ENCODE measurements at regions of chr13 and their contacts with region 1.

Region 1: GRCh38 chr13:51832471-51833152 is 12.4 kb downstream of the TMEM272 start:
- DNase-seq: peak; percentile 65
- ATAC-seq: peak; percentile 94
- H3K4me3 ChIP-seq: no peak overlapping the region
- H3K4me3 Mint-ChIP-seq: peak overlapping the region; percentile 37
- H3K27ac ChIP-seq: no peak overlapping the region
- H3K27ac Mint-ChIP-seq: no peak overlapping the region
- H3K4me1 ChIP-seq: peaks cover 7 to 29% of the 10 kb centered on the region in 2 donors
- H3K4me1 Mint-ChIP-seq: peaks cover 39% of the 10 kb centered on the region
- H3K27me3 ChIP-seq: peaks cover 0 to 8% (median 0%) of the 10 kb centered on the region in 4 experiments
- H3K27me3 Mint-ChIP-seq: peaks cover 22% of the 10 kb centered on the region
- CTCF ChIP-seq: peak; percentile 39

Region 2: DNA sequence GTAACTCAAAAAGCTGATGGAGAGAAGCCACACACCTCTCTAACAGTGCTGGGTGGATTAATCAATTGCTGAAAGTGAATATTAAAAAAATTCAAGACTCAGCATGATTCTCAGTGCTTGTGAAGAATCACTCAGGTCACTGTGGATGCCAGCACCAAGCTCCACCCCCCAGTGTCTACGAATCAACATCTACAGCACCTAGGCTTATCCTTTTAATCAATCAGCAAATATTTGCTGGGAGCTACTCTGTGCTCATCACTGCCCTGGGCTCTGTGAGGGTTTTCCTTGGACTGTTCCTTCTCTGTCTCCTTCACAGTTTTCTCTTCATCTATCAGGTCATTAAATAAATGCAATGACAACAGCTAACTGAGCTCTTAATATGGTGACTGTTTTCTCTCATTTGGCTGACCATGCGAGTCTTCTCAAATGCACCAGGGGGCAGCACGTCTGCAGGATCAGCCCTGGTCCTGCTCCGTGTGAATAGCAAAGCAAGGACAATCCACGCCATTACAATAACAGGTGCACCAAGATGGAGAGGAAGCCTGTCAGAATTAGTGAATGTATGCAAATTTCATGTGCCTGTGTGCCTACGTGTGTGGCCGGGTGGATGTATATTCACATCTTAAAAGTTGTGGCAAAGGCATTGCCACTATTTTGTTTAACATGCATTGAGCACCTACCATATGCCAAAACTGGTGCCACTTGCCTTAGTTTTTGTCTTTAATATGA is 707.0 kb before region 1 on chr13:
- CTCF ChIA-PET with region 1: interaction called, 10 read pairs
- POLR2A ChIA-PET with region 1: no interaction called
- intact Hi-C with region 1: no loop called
- DNase-seq: peak; percentile 71
- ATAC-seq: peak; percentile 80
- H3K4me3 ChIP-seq: no peak overlapping the region
- H3K4me3 Mint-ChIP-seq: no peak overlapping the region
- H3K27ac ChIP-seq: no peak overlapping the region
- H3K27ac Mint-ChIP-seq: no peak overlapping the region
- H3K4me1 ChIP-seq: peaks cover 0 to 8% of the 10 kb centered on the region in 2 donors
- H3K4me1 Mint-ChIP-seq: peaks cover 4% of the 10 kb centered on the region
- H3K27me3 ChIP-seq: peaks cover 0 to 6% (median 2%) of the 10 kb centered on the region in 4 experiments
- H3K27me3 Mint-ChIP-seq: peaks cover 25% of the 10 kb centered on the region
- CTCF ChIP-seq: peak; percentile 77

Region 3: DNA sequence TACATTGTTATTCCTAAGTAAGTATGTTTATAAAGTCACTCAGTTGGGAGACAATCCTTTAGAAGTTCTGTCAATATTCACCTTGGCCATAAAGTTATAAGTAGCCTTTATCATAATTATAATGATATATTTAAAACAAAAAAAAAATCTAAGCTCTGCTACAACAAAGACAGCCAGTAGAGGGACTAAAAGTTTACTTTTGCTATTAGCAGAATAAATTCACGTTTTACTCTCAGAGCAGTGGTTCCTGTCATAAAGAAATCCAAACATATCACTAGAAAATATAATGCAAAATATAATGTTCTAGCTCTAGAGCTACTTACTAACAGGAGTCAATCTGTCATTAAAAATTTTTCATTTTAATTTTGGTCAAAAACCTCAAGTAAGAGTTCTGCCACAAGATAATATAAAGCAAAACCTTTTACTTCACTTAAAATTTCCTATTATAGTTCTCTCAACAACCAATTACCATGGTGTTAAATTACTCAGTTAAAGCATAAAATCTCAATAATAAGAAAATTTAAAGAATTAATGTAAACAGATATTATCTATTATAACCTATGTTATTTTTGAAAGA is 397.5 kb before region 1 on chr13:
- CTCF ChIA-PET with region 1: interaction called, 10 read pairs
- POLR2A ChIA-PET with region 1: no interaction called
- intact Hi-C with region 1: no loop called
- DNase-seq: peak; percentile 50
- ATAC-seq: no peak
- H3K4me3 ChIP-seq: no peak overlapping the region
- H3K4me3 Mint-ChIP-seq: no peak overlapping the region
- H3K27ac ChIP-seq: no peak overlapping the region
- H3K27ac Mint-ChIP-seq: no peak overlapping the region
- H3K4me1 ChIP-seq: no peaks in the 10 kb centered on the region
- H3K4me1 Mint-ChIP-seq: peaks cover 7% of the 10 kb centered on the region
- H3K27me3 ChIP-seq: no peaks in the 10 kb centered on the region
- H3K27me3 Mint-ChIP-seq: no peaks in the 10 kb centered on the region
- CTCF ChIP-seq: peak; percentile 86

Region 4: DNA sequence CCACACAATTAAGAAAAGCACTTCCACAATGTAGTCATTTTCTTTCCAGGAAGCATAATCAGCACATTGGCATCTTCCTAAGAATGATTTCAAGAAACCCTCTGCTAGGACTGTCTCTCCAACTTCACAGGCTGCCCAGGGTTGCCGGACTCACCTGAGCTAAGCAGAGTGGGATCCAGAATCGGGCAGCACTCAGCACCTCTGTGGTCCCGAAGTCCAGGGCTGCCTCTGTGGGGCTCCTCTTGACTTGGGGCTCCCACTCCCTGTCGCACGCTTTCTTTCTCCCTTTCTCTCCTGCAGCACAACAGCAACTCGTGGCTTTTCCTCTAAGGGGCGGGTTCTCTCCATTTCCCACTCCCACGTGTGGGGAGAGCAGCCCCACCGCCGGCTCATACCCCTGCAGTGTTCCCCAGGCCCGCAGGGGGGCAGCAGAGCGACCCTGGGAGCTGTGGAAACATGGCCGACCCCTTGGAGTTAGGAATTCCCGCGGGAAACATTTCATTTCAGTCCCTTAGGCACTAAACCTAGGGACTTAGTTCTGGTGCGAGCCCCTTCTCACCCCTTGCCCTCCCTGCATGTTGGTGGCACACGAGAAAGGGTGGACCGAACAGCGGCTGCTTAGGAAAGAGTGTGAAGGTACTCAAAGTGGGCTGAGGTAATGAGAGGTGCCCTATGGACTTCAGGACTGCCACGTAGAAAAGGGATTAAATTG is 12.4 kb after region 1 on chr13 and contains the start of gene TMEM272:
- CTCF ChIA-PET with region 1: interaction called, 12 read pairs
- POLR2A ChIA-PET with region 1: no interaction called
- intact Hi-C with region 1: no loop called
- DNase-seq: peak; percentile 56
- ATAC-seq: peak; percentile 71
- H3K4me3 ChIP-seq: no peak within 1 kb of the TSS
- H3K4me3 Mint-ChIP-seq: no peak within 1 kb of the TSS
- H3K27ac ChIP-seq: no peak within 1 kb of the TSS
- H3K27ac Mint-ChIP-seq: no peak within 1 kb of the TSS
- H3K4me1 ChIP-seq: peaks cover 0 to 6% of the 10 kb centered on the region in 2 donors
- H3K4me1 Mint-ChIP-seq: peaks cover 5% of the 10 kb centered on the region
- H3K27me3 ChIP-seq: peaks cover 0 to 8% (median 0%) of the 10 kb centered on the region in 4 experiments
- H3K27me3 Mint-ChIP-seq: peaks cover 16% of the 10 kb centered on the region
- CTCF ChIP-seq: peak; percentile 82
- total RNA-seq, gene TMEM272: not detected in 2 replicates

Region 5: GRCh38 chr13:52779103-52779502 is 946.5 kb after region 1 on chr13:
- CTCF ChIA-PET with region 1: no interaction called
- POLR2A ChIA-PET with region 1: no interaction called
- intact Hi-C with region 1: no loop called
- DNase-seq: no peak
- ATAC-seq: no peak
- H3K4me3 ChIP-seq: no peak overlapping the region
- H3K4me3 Mint-ChIP-seq: no peak overlapping the region
- H3K27ac ChIP-seq: no peak overlapping the region
- H3K27ac Mint-ChIP-seq: no peak overlapping the region
- H3K4me1 ChIP-seq: no peaks in the 10 kb centered on the region
- H3K4me1 Mint-ChIP-seq: no peaks in the 10 kb centered on the region
- H3K27me3 ChIP-seq: peaks cover 0 to 5% (median 0%) of the 10 kb centered on the region in 4 experiments
- H3K27me3 Mint-ChIP-seq: peaks cover 26% of the 10 kb centered on the region
- CTCF ChIP-seq: no peak

Measured in B cell (primary cell).